ENCODE measurements at regions of chr9 and their contacts with region 1.

Region 1: DNA sequence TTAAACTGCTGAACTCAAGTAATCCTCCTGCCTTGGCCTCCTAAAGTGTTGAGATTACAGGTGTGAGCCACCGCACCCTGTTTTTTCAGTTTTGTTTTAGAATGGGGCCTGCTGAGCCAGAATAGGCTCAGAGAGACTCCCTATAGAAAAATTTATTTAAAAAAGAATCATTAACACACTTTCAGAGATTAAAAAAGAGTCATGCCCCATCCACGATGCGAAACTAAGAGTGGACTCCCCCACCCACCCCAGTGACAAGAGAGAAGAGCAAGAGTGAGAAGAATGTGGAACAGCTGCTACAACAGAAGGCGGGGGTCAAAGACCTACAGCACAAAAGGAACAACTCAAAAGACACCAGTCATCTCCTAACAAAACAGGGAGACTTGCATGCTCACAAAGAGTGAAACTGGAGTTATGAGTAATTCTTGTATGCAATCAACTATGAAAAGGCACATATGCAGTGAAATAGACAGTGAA is 47.2 kb downstream of the GLDC start:
- DNase-seq: no peak
- H3K4me3 ChIP-seq: no peak overlapping the region
- H3K27ac ChIP-seq: no peak overlapping the region
- H3K4me1 ChIP-seq: no peaks in the 10 kb centered on the region
- H3K27me3 ChIP-seq: no peaks in the 10 kb centered on the region
- CTCF ChIP-seq: no peak
- POLR2A ChIP-seq: no peak

Region 2: DNA sequence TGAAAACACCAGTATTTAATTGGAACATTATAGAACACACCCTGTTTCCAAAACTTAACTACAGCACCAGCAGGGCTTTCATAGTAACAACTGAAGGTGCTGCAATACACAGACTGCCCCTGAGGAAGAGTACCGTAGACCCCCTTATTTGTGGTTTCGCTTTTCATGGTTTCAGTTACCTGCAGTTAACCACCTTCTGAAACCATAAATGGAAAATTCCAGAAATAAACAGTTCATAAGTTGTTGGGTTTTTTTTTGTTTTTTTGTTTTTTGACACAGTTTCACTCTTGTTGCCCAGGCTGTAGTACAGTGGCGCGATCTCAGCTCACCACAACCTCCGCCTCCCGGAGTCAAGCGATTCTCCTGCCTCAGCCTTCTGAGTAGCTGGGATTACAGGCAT is 56.7 kb after region 1 on chr9:
- intact Hi-C with region 1: no loop called
- DNase-seq: no peak
- H3K4me3 ChIP-seq: no peak overlapping the region
- H3K27ac ChIP-seq: no peak overlapping the region
- H3K4me1 ChIP-seq: no peaks in the 10 kb centered on the region
- H3K27me3 ChIP-seq: no peaks in the 10 kb centered on the region
- CTCF ChIP-seq: no peak
- POLR2A ChIP-seq: no peak

Region 3: DNA sequence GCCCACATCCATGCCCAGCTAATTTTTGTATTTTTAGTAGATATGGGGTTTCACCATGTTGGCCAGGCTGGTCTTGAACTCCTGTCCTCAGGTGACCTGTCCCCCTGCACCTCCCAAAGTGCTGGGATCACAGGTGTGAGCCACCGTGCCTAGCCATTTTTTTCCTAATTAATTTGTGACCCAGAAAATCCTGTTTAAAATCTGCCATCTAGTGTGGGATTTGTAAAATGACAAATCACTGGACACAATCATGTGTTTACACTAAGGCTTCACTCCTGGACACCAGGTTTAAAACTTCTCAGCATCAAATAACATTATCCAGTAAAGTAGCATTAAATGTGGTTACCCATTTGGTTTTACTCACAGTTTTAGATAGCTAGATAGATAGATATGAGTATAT is 140.9 kb after region 1 on chr9:
- intact Hi-C with region 1: loop called in 1 of 2 experiments (anchors 10 kb)
- DNase-seq: no peak
- H3K4me3 ChIP-seq: no peak overlapping the region
- H3K27ac ChIP-seq: no peak overlapping the region
- H3K4me1 ChIP-seq: no peaks in the 10 kb centered on the region
- H3K27me3 ChIP-seq: no peaks in the 10 kb centered on the region
- CTCF ChIP-seq: peak in 5 of 6 experiments; percentile 5 to 25 (median 22)
- POLR2A ChIP-seq: no peak

Measured in adrenal gland (tissue), 19 donors.